ENCODE measurements at regions of chr19 and their contacts with region 1.

Region 1: GRCh38 chr19:19404879-19405860 is at the start of gene GATAD2A:
- DNase-seq: peak; percentile 87 to 93
- H3K4me3 ChIP-seq: peak within 1 kb of the TSS; percentile 92
- H3K27ac ChIP-seq: peak within 1 kb of the TSS; percentile 82
- H3K4me1 ChIP-seq: peaks cover 63% of the 10 kb centered on the region
- H3K27me3 ChIP-seq: no peaks in the 10 kb centered on the region
- CTCF ChIP-seq: no peak; the same call in 1 of the 2 replicates
- total RNA-seq, gene GATAD2A: 97.8 and 129 TPM in 2 replicates

Region 2: GRCh38 chr19:19203012-19203856 is 201.9 kb before region 1 on chr19 and contains the start of gene NR2C2AP:
- CTCF ChIA-PET with region 1: interaction called, 13 read pairs
- POLR2A ChIA-PET with region 1: no interaction called
- intact Hi-C with region 1: no loop called
- DNase-seq: peak; percentile 80 to 90
- H3K4me3 ChIP-seq: peak within 1 kb of the TSS; percentile 91
- H3K27ac ChIP-seq: peak within 1 kb of the TSS; percentile 68
- H3K4me1 ChIP-seq: peaks cover 14% of the 10 kb centered on the region
- H3K27me3 ChIP-seq: peaks cover 16% of the 10 kb centered on the region; the same call in 1 of the 2 replicates
- CTCF ChIP-seq: no peak
- total RNA-seq, gene NR2C2AP: 25.7 and 28.7 TPM in 2 replicates

Region 3: DNA sequence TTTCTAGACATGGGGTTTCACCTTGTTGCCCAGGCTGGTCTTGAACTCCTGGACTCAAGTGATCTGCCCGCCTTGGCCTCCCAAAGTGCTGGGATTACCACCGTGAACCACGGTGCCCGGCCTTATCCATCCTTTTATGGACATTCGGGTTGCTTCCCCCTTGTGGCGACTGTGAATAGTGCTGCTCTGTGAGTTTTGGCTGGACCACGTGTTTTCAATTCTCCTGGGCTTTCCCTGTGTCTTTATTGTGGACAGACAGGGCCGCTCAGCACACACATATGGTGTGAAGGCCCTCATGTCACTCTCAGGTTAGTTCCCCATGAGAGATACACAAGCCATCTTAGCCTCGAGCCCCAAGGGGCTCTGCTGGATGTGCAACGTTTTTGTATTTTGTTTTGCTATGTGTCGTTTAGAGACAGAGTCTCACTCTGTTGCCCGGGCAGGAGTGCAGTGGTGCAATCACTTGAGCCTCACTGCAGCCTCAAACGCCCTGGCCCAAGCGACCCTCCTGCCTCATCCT is 44.0 kb before region 1 on chr19:
- CTCF ChIA-PET with region 1: interaction called, 3 read pairs
- POLR2A ChIA-PET with region 1: no interaction called
- intact Hi-C with region 1: loop called (anchors 1 kb)
- DNase-seq: peak; percentile 61 to 72
- H3K4me3 ChIP-seq: no peak overlapping the region
- H3K27ac ChIP-seq: no peak overlapping the region
- H3K4me1 ChIP-seq: peaks cover 10% of the 10 kb centered on the region; the same call in 1 of the 2 replicates
- H3K27me3 ChIP-seq: no peaks in the 10 kb centered on the region
- CTCF ChIP-seq: peak; percentile 92

Region 4: DNA sequence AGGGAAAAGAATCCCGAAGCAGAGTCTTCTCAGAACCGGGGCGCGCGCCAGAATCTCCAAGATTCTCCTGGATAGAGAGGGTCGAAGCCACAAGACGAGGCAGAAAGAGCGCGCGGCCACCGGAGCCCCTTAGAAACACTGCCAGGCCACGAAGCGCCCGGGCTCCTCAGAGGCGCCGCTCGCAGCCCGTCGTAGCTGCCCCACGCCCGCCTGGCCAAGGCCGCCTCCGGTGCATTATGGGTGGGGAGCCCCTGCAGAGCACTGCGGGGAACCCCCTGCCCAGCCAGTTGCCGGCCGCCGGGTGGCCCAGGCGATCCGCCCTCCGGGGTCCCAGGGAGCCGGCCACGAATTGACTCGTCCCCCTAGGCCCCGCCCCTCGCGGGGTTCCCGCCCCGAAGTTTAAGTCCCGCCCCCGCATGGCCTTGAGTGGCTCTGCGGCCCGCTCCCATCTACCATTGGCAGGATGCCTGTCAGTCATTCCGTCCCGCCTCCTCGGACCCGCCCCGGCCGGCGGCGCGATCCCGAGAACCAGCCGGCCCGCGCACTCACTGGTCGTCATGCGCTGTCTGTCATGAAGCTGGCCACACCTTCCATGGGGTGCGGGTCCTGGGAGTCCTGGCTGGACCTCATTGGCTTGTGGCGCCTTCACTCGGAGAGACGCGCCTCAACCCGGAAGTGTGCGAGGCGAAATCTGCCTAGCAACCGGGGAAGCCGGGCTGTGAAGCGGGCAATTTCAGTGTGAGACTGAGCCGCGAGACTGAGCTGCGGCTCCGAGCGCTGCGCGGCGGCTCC is 19.9 kb before region 1 on chr19:
- CTCF ChIA-PET with region 1: no interaction called
- POLR2A ChIA-PET with region 1: no interaction called
- intact Hi-C with region 1: loop called (anchors 1 kb)
- DNase-seq: peak; percentile 99 to 100
- H3K4me3 ChIP-seq: peak overlapping the region; percentile 56
- H3K27ac ChIP-seq: peak overlapping the region; percentile 68
- H3K4me1 ChIP-seq: peaks cover 33% of the 10 kb centered on the region
- H3K27me3 ChIP-seq: no peaks in the 10 kb centered on the region
- CTCF ChIP-seq: no peak

Region 5: DNA sequence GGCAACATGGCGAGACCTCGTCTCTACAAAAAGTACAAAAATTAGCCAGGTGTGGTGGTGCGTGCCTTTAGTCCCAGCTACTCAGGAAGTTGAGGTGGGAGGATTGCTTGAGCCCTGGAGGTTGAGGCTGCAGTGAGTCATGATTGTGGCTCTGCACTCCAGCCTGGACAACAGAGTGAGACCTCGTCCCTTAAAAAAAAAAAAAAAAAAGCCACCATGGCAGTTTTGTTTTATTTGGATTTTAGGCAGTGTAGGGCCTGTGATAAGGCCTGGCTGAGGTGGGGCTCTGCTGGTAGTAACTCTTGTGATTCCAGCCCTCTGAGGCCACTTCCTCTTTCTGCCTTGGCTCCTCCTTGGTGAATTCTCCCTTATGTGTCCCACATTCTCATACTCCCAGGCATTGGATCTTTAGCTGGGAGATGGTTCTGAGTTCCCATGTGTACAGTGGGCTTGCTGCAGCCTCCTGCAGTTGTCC is 39.5 kb after region 1 on chr19:
- CTCF ChIA-PET with region 1: interaction called, 11 read pairs
- POLR2A ChIA-PET with region 1: no interaction called
- intact Hi-C with region 1: no loop called
- DNase-seq: no peak
- H3K4me3 ChIP-seq: no peak overlapping the region
- H3K27ac ChIP-seq: no peak overlapping the region
- H3K4me1 ChIP-seq: peaks cover 16% of the 10 kb centered on the region
- H3K27me3 ChIP-seq: no peaks in the 10 kb centered on the region
- CTCF ChIP-seq: no peak